T-cell (primary cell): ENCODE measurements at regions of chr20 and their contacts with region 1.

Region 1: DNA sequence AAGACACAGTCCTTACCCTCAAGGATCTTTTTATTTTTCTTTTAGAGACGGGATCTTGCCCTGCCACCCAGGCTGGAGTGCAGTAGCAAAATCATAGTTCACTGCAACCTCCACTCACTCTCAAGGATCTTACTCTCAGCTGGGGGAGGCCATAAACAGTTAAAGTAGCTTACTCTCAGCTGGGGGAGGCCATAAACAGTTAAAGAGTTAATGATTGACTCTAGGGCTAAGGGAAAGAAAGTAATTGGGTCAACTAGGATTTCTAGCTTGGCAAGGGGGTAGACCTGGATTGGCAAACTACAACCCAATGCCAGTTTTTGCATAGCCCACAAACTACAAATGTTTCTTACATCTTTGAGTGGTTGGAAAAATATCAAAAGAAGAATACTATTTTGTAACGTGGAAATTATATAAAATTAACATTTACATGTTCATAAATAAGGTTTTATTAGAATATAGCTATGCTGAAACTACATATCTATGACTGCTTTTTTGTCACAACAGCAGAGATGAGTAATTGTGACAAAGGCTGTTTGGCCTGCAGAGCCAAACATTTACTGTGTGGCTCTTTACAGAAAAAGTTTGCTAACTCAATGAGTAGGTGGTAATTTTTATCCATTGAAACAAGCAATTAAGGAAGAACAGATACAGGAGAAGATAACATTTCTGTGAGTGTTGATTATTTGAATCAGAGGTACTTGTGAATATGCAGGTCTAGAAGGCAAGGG is 46.4 kb downstream of the PTPRA start:
- DNase-seq: no peak
- ATAC-seq: no peak
- H3K4me3 ChIP-seq: no peak overlapping the region
- H3K4me3 Mint-ChIP-seq: no peak overlapping the region
- H3K27ac ChIP-seq: no peak overlapping the region
- H3K27ac Mint-ChIP-seq: peak overlapping the region in 1 of 2 donors; percentile 22
- H3K4me1 ChIP-seq: no peaks in the 10 kb centered on the region
- H3K4me1 Mint-ChIP-seq: peaks cover 28 to 39% (median 33%) of the 10 kb centered on the region in 3 donors
- H3K27me3 ChIP-seq: no peaks in the 10 kb centered on the region
- H3K27me3 Mint-ChIP-seq: no peaks in the 10 kb centered on the region

Region 2: GRCh38 chr20:2932498-2932897 is 12.8 kb after region 1 on chr20:
- CTCF ChIA-PET with region 1: no interaction called
- POLR2A ChIA-PET with region 1: no interaction called
- DNase-seq: no peak
- ATAC-seq: no peak
- H3K4me3 ChIP-seq: no peak overlapping the region
- H3K4me3 Mint-ChIP-seq: no peak overlapping the region
- H3K27ac ChIP-seq: no peak overlapping the region
- H3K27ac Mint-ChIP-seq: no peak overlapping the region
- H3K4me1 ChIP-seq: no peaks in the 10 kb centered on the region
- H3K4me1 Mint-ChIP-seq: peaks cover 5 to 10% (median 10%) of the 10 kb centered on the region in 3 donors
- H3K27me3 ChIP-seq: no peaks in the 10 kb centered on the region
- H3K27me3 Mint-ChIP-seq: no peaks in the 10 kb centered on the region

Region 3: DNA sequence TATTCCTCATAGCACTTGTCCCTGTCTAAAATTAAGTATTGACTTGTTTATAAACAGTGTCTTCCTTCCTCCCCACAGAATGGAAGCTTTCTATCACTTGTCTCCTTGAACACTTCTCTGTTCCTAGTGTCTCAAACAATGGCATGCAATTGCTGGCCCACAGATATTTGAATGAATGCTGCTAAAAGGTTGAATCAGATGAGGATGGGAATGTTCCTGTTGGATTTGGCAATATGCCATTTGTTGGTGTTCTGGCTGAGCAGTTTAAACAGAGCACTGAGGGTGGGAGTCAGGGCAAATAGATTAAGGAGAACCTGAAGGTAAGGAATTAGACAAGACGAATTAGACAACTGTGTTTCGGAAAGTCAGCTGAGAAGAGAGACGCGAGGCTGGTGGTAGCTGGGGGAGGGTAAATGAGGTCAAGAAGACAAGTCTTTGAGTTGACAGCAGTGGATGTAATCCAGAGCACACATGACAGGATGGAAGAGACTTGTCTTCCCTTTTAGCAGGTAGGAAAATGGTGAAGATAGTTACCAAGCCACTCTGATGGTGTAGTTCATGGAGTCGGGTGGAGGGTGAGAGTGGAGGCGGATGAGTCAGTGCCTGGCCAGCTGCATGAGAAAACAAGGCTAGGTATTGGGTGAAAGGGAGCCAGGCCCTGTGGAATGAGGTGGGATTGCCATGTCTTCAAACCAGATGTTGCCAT is 65.4 kb after region 1 on chr20:
- CTCF ChIA-PET with region 1: no interaction called
- POLR2A ChIA-PET with region 1: interaction called in 1 of 2 experiments, 11 read pairs
- DNase-seq: no peak
- ATAC-seq: no peak
- H3K4me3 ChIP-seq: no peak overlapping the region
- H3K4me3 Mint-ChIP-seq: no peak overlapping the region
- H3K27ac ChIP-seq: no peak overlapping the region
- H3K27ac Mint-ChIP-seq: no peak overlapping the region
- H3K4me1 ChIP-seq: peaks cover 0 to 9% of the 10 kb centered on the region in 2 experiments
- H3K4me1 Mint-ChIP-seq: peaks cover 2 to 9% (median 4%) of the 10 kb centered on the region in 3 donors
- H3K27me3 ChIP-seq: no peaks in the 10 kb centered on the region
- H3K27me3 Mint-ChIP-seq: no peaks in the 10 kb centered on the region

Region 4: DNA sequence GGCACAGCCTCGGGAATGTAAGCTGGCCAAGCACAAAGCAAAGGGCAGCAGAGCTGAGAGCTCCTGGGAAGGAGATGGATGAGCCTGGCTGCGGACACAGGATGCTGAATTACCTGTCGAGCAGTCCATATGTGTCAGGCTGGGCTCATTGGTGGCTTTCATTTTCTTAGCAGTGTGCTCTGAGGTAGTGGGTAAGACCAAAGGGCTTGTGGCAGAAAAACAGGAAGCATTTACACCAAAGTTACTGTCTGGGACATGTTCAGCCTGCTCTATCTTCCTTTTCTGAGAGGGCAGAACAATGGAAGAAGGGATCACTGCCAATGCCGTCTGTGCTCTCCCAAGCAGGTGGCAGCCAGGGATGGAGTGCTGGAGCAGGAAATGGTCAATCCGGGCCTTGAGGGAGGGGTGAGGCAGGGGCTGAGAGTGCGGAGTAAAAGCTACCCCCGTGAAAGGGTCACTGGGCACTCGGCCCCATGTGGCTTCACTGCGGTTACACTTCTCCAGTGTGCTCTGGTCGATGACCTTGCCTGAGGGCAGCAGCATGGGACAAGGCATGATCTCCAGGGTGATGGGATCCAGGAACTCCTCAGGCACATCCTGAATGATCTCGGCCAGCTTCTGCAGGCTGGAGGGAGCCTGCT is 201.7 kb after region 1 on chr20:
- CTCF ChIA-PET with region 1: no interaction called
- POLR2A ChIA-PET with region 1: no interaction called
- DNase-seq: peak in 30 of 35 experiments; percentile 9 to 69 (median 34)
- ATAC-seq: peak; percentile 82 to 90 (median 86)
- H3K4me3 ChIP-seq: peak overlapping the region in 1 of 2 donors; percentile 44
- H3K4me3 Mint-ChIP-seq: peak overlapping the region; percentile 62 to 76 (median 69)
- H3K27ac ChIP-seq: peak overlapping the region; percentile 80
- H3K27ac Mint-ChIP-seq: peak overlapping the region; percentile 99
- H3K4me1 ChIP-seq: peaks cover 22 to 47% of the 10 kb centered on the region in 2 experiments
- H3K4me1 Mint-ChIP-seq: peaks cover 35 to 55% (median 47%) of the 10 kb centered on the region in 3 donors
- H3K27me3 ChIP-seq: no peaks in the 10 kb centered on the region
- H3K27me3 Mint-ChIP-seq: no peaks in the 10 kb centered on the region